ENCODE measurements at regions of chr10 and their contacts with region 1.

Region 1: GRCh38 chr10:75042292-75042974 is 69.0 kb upstream of the SAMD8 start:
- DNase-seq: peak; percentile 47 to 81
- ATAC-seq: peak; percentile 88 to 93
- H3K4me3 ChIP-seq: no peak overlapping the region
- H3K27ac ChIP-seq: peak overlapping the region; percentile 57 to 85 (median 80)
- H3K4me1 ChIP-seq: peaks cover 37 to 47% of the 10 kb centered on the region in 2 donors
- H3K27me3 ChIP-seq: no peaks in the 10 kb centered on the region
- CTCF ChIP-seq: no peak
- POLR2A ChIP-seq: no peak

Region 2: GRCh38 chr10:75071756-75072155 is 29.3 kb after region 1 on chr10:
- in situ Hi-C with region 1: no loop called
- intact Hi-C with region 1: loop called (anchors 2 kb)
- DNase-seq: no peak
- ATAC-seq: no peak
- H3K4me3 ChIP-seq: peak overlapping the region in 1 of 4 donors; percentile 66
- H3K27ac ChIP-seq: peak overlapping the region; percentile 79 to 96 (median 91)
- H3K4me1 ChIP-seq: peaks cover 28 to 35% of the 10 kb centered on the region in 2 donors
- H3K27me3 ChIP-seq: no peaks in the 10 kb centered on the region
- CTCF ChIP-seq: no peak
- POLR2A ChIP-seq: no peak

Region 3: GRCh38 chr10:75099952-75100763 is 57.7 kb after region 1 on chr10:
- in situ Hi-C with region 1: no loop called
- intact Hi-C with region 1: loop called (anchors 2 kb)
- DNase-seq: peak; percentile 61 to 75
- ATAC-seq: peak; percentile 57 to 76
- H3K4me3 ChIP-seq: no peak overlapping the region
- H3K27ac ChIP-seq: peak overlapping the region; percentile 97 to 100 (median 98)
- H3K4me1 ChIP-seq: peaks cover 57% of the 10 kb centered on the region in 2 donors
- H3K27me3 ChIP-seq: no peaks in the 10 kb centered on the region
- CTCF ChIP-seq: peak; percentile 97 to 99 (median 99)
- POLR2A ChIP-seq: no peak

Region 4: DNA sequence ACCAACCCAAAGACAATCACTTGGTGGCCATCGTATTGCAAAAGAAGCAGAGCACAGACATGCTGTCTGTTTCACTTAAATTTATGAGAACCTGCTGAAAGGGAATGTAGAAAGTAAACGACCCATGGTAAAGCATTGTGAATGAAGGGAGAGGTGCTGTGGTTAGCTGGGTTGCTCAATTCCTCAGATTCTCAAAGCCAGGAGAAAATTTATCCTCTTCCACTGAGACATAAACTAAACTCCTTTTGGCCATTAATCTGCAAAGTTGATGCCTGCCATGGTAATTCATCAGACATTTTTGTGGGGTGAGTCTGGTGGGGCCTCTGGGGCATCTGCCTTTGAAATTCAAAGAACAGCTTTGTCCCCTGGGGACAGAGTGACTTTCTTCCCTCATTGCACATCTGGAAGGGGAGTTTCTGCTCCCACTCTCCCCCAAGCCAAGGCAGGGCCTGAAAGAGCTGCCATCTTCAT is 1340.0 kb after region 1 on chr10:
- in situ Hi-C with region 1: no loop called
- intact Hi-C with region 1: no loop called
- DNase-seq: peak in 1 of 2 donors; percentile 28
- ATAC-seq: peak in 1 of 2 donors; percentile 72
- H3K4me3 ChIP-seq: no peak overlapping the region
- H3K27ac ChIP-seq: no peak overlapping the region
- H3K4me1 ChIP-seq: no peaks in the 10 kb centered on the region
- H3K27me3 ChIP-seq: no peaks in the 10 kb centered on the region
- CTCF ChIP-seq: no peak
- POLR2A ChIP-seq: no peak

Measured in gastrocnemius medialis (tissue), 4 donors.